ENCODE measurements at regions of chr15 and their contacts with region 1.

Region 1: DNA sequence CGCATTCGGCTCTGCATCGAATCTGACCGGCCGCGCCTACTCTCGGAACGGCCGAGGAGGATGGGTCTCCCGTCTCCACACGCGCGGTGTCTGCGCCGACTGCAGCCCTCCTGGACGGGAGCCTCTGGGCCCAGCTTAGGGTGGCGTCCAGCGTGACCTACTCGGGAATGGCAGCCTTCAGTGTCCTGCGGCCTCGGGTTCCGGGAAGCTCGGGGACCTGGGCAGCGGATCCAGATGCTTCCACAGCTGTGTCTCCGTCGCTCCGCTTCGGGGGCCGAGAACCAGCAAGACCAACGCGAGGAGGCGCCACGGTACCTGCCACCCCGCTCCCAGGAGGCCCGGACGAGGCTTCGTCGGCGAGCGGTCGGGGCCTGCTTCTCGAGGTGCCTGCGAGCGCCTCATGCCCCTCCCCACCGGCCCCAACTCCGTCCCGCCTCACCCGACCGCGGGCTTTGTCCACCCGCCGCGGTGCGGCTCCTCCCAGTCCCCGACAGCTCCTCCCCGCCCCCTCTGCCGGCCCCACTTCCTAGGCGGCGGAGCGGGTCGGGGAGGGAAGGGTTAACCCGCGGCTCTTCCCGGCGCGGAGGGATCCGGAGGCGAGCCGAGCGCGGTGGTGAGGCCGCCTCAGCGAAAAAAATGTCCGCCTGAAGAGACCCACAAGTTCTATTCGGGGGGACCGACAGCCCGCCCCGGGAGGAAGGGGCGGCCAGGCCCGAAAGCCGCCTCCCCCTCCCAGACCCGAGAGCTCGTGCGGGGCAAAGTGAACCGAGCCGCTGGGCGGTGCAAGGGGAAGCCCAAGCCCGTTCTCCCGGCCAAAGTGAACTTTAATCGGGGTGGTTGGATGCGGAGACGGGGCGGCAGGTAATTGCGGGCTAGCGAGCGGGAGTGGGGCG is at the start of gene TCF12:
- DNase-seq: peak; percentile 96 to 97 (median 97)
- ATAC-seq: peak; percentile 94 to 98 (median 97)
- H3K4me3 ChIP-seq: peak within 1 kb of the TSS; percentile 67 to 97 (median 91)
- H3K27ac ChIP-seq: peak within 1 kb of the TSS; percentile 78 to 98 (median 96)
- H3K4me1 ChIP-seq: peaks cover 2 to 61% (median 50%) of the 10 kb centered on the region in 12 donors
- H3K27me3 ChIP-seq: no peaks in the 10 kb centered on the region
- CTCF ChIP-seq: peak in 11 of 12 donors; percentile 15 to 64 (median 41)
- POLR2A ChIP-seq: peak in 1 of 2 donors; percentile 85
- total RNA-seq, gene TCF12: 31.8 to 77.3 (median 46.8) TPM

Region 2: DNA sequence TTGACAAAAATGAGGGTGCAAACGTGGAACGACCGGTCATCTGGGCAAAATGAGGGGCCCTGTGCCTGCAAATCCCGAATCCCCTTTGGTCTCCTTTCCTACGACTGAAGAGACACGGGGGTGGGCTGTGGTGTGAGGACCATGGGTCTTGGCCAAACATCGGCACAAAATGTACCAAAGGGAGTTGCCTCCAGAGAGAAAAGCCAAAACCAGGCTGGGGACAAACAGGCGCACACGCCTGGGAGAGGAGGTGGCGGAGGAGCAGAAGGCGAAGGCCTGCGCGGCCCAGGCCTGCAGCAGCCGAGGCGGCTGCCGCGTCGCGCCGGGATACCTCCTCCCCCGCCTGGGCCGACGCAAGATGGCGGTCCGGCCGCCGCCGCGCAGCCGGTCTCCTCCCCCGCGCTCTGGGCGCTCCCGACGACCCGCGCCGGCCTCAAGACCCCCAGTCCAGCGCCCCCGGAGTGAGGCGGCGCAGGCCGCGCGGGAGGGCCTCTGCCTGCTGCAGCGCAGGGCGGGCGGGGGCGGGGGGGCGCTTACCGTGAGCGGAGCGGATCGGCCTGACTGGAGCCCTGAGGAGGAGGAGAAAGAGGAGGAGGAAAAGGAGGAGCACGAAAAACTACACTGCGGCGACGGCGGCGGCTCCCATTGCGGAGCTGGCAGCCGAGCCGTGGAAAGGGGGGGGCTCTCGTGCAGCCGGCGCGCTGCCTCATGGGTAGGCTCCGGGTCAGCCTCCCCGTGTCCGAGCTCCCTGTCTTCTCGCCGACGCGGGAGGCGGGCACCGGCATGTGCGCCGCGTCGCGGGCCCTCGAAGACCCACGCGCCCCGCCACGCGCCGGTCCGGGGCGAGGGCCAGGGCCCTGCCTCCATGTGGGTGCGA is 185.1 kb before region 1 on chr15 and contains the start of gene ZNF280D:
- intact Hi-C with region 1: loop called in 2 of 10 experiments (anchors 10 kb)
- DNase-seq: peak; percentile 93 to 96 (median 94)
- ATAC-seq: peak; percentile 85 to 97 (median 96)
- H3K4me3 ChIP-seq: peak within 1 kb of the TSS; percentile 61 to 88 (median 76)
- H3K27ac ChIP-seq: peak within 1 kb of the TSS; percentile 96 to 99 (median 98)
- H3K4me1 ChIP-seq: peaks cover 0 to 48% (median 39%) of the 10 kb centered on the region in 12 donors
- H3K27me3 ChIP-seq: no peaks in the 10 kb centered on the region
- CTCF ChIP-seq: peak in 1 of 12 donors; percentile 7
- POLR2A ChIP-seq: peak in 1 of 2 donors; percentile 61
- total RNA-seq, gene ZNF280D: 14.6 to 32.8 (median 23.9) TPM

Region 3: GRCh38 chr15:56886932-56887781 is 31.1 kb before region 1 on chr15:
- intact Hi-C with region 1: loop called (anchors 1 to 5 kb)
- DNase-seq: peak; percentile 96 to 97 (median 97)
- ATAC-seq: peak; percentile 98 to 99 (median 98)
- H3K4me3 ChIP-seq: peak overlapping the region; percentile 47 to 86 (median 71)
- H3K27ac ChIP-seq: peak overlapping the region; percentile 95 to 99 (median 98)
- H3K4me1 ChIP-seq: peaks cover 0 to 32% (median 17%) of the 10 kb centered on the region in 12 donors
- H3K27me3 ChIP-seq: no peaks in the 10 kb centered on the region
- CTCF ChIP-seq: peak in 3 of 12 donors; percentile 12 to 33 (median 28)
- POLR2A ChIP-seq: peak in 1 of 2 donors; percentile 75

Region 4: DNA sequence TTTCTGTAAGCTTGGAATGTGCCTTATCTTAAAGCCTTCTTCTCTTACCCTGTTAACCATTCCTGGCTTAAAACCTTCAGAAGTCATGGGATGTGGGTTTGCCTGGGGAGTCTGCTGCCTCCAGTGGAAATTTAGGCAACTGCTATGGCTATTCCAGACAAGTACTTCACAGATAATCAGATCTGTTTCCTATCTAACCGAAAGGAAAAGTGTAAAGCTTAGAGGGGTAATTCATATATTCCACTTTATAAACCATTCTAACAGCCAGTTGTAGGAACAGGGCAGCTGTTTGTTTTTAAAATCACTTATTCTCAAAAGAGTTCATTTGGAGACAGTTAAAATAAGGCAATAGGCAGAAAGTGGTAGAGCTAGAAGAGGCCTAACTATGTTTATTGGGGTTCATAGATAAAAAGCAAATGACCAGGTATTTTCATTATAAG is 220.1 kb after region 1 on chr15:
- intact Hi-C with region 1: loop called (anchors 2 to 10 kb)
- DNase-seq: peak in 1 of 5 donors; percentile 31
- ATAC-seq: peak; percentile 53 to 82 (median 78)
- H3K4me3 ChIP-seq: no peak overlapping the region
- H3K27ac ChIP-seq: no peak overlapping the region
- H3K4me1 ChIP-seq: peaks cover 0 to 56% (median 41%) of the 10 kb centered on the region in 12 donors
- H3K27me3 ChIP-seq: no peaks in the 10 kb centered on the region
- CTCF ChIP-seq: peak; percentile 60 to 86 (median 78)
- POLR2A ChIP-seq: no peak

Region 5: GRCh38 chr15:57213862-57214261 is 295.6 kb after region 1 on chr15:
- intact Hi-C with region 1: loop called in 4 of 10 experiments (anchors 2 to 10 kb)
- DNase-seq: no peak
- ATAC-seq: peak; percentile 47 to 68 (median 60)
- H3K4me3 ChIP-seq: no peak overlapping the region
- H3K27ac ChIP-seq: no peak overlapping the region
- H3K4me1 ChIP-seq: peaks cover 0 to 67% (median 22%) of the 10 kb centered on the region in 12 donors
- H3K27me3 ChIP-seq: no peaks in the 10 kb centered on the region
- CTCF ChIP-seq: peak; percentile 30 to 73 (median 64)
- POLR2A ChIP-seq: no peak

Measured in heart left ventricle (tissue), 16 donors.